Esophagus muscularis mucosa (tissue), 4 donors: ENCODE measurements at regions of chr18 and their contacts with region 1.

Region 1: DNA sequence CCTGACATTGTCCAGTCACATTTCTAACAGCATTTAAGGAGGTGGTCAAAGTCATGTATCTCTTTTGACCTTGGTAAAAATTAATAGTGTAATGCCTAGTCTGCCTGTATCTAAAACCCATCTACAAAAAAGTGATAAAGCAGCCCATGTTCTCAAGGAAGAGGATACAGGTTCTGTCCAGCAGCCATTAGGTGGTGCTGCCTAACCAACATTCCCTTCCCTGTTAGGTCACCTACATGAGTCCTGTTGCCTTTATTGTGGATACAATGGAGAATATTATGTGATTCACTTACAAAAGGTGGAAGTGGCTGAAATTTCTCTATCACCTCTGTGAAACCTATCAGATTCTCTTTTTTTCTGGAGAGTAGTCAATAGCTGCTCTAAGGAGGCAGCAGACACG is 52.5 kb downstream of the AQP4 start:
- DNase-seq: no peak
- H3K4me3 ChIP-seq: no peak overlapping the region
- H3K27ac ChIP-seq: no peak overlapping the region
- H3K4me1 ChIP-seq: no peaks in the 10 kb centered on the region
- H3K27me3 ChIP-seq: no peaks in the 10 kb centered on the region
- CTCF ChIP-seq: peak; percentile 29 to 52 (median 32)
- EP300 ChIP-seq: no peak
- POLR2A ChIP-seq: no peak

Region 2: DNA sequence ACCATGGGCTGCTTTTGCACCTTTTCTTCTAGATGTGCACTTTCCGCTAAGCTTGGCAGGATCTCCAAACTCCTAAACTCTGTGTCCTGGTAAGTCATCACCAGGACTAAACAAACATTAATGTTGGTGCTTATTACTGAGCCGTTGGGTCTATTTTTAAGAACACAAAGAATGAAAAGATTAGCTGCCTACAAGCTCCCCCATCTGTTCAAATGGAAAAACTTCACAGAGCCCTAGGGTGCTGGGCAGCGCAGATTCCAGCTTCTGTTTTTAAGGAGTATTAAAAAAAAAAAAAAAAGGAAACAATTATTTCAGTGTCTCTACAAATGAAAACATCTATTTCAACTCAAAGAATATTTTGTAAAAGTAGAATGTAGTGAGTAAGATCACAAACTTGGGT is 150.2 kb after region 1 on chr18:
- intact Hi-C with region 1: loop called (anchors 5 kb)
- DNase-seq: no peak
- H3K4me3 ChIP-seq: no peak overlapping the region
- H3K27ac ChIP-seq: no peak overlapping the region
- H3K4me1 ChIP-seq: peaks cover 7 to 16% (median 12%) of the 10 kb centered on the region in 4 donors
- H3K27me3 ChIP-seq: no peaks in the 10 kb centered on the region
- CTCF ChIP-seq: peak in 1 of 3 experiments; percentile 37
- EP300 ChIP-seq: no peak
- POLR2A ChIP-seq: no peak

Region 3: DNA sequence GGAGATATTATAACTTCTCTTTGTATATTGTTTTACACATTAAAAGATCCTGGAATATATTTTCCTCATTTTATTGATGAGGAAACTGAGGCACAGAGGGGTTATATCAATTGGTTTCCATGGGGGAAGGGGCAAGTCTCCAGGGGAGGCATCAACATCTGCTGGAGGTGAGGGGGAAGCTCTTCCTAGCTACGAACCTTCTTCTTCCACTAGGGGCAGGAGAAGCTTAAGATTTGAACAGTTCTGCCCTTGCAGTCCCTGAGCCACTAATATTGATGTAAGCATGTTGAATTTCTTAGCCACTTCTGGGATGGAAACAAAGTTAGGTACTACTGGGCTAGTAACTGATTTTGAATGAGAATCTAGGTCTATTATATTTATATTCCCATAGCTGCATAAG is 192.5 kb after region 1 on chr18:
- intact Hi-C with region 1: loop called (anchors 5 kb)
- DNase-seq: no peak
- H3K4me3 ChIP-seq: no peak overlapping the region
- H3K27ac ChIP-seq: no peak overlapping the region
- H3K4me1 ChIP-seq: peaks cover 0 to 3% (median 0%) of the 10 kb centered on the region in 4 donors
- H3K27me3 ChIP-seq: no peaks in the 10 kb centered on the region
- CTCF ChIP-seq: peak in 2 of 3 experiments; percentile 14 to 33
- EP300 ChIP-seq: no peak
- POLR2A ChIP-seq: no peak

Region 4: GRCh38 chr18:27109451-27109850 is 296.4 kb after region 1 on chr18:
- intact Hi-C with region 1: no loop called
- DNase-seq: no peak
- H3K4me3 ChIP-seq: no peak overlapping the region
- H3K27ac ChIP-seq: no peak overlapping the region
- H3K4me1 ChIP-seq: no peaks in the 10 kb centered on the region
- H3K27me3 ChIP-seq: no peaks in the 10 kb centered on the region
- CTCF ChIP-seq: no peak
- EP300 ChIP-seq: no peak
- POLR2A ChIP-seq: no peak

Region 5: GRCh38 chr18:27206411-27206810 is 393.4 kb after region 1 on chr18:
- intact Hi-C with region 1: no loop called
- DNase-seq: no peak
- H3K4me3 ChIP-seq: no peak overlapping the region
- H3K27ac ChIP-seq: no peak overlapping the region
- H3K4me1 ChIP-seq: no peaks in the 10 kb centered on the region
- H3K27me3 ChIP-seq: no peaks in the 10 kb centered on the region
- CTCF ChIP-seq: no peak
- EP300 ChIP-seq: no peak
- POLR2A ChIP-seq: no peak